RWPE1 (cell line): ENCODE measurements at regions of chr1 and their contacts with region 1.

Region 1: GRCh38 chr1:207868774-207869721 is 41.9 kb downstream of the CD34 start:
- DNase-seq: peak; percentile 79
- H3K27ac ChIP-seq: peak overlapping the region; percentile 77
- CTCF ChIP-seq: peak; percentile 95

Region 2: GRCh38 chr1:207828485-207829158 is 40.4 kb before region 1 on chr1:
- CTCF ChIA-PET with region 1: interaction called, 30 read pairs
- POLR2A ChIA-PET with region 1: no interaction called
- DNase-seq: peak; percentile 76
- H3K27ac ChIP-seq: no peak overlapping the region
- CTCF ChIP-seq: no peak; the same call in 1 of the 2 replicates

Region 3: DNA sequence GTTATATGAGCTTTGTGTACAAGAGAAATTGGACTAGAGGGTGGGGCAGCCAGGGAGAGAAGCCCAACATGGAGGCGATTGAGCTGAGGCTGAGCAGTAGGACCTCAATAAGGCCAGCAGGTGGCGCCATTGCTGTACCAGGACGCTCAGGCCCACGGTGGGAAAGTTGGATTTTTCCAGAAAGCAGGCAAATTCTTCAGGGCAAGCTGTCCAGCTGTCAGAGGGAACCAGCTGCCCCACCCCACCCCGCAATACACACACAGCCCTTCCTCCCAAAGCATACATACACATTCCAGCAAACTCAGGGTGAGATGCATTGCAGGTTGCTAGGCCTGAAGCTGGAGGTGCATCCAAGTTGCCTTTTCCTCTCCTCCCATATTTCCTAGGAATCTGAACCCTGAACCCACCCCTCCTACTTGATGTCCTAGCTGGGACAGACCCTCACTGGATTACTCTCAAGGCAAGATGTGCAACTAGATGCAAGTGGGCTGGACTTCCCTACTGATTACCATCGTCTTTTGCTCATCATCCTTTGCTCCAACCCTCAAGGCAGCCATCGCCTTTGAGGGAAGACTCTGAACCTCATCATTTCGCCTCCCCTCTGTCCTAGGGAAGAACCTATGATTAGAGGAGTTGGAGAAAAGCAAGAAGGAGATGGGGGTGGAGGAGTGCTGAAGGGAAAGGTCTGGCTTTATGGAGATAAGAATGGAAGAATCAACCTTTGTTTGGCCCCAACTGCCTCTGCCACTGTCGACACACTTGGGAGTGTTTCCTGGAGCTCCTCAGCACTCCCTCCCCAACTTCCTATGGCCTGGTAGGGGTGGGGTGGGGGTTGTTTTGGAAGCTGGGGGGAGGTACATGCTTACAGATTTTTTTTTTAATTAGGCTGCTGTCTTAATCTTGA is 16.3 kb after region 1 on chr1:
- CTCF ChIA-PET with region 1: interaction called, 13 read pairs
- POLR2A ChIA-PET with region 1: no interaction called
- DNase-seq: peak; percentile 79
- H3K27ac ChIP-seq: no peak overlapping the region
- CTCF ChIP-seq: peak; percentile 87